Activated CD4-positive, alpha-beta T cell treated with anti-CD3 and anti-CD28 coated beads, Interleukin-2, amount 10 ng/mL, durations not matched to agents 7 days and 5 days (primary cell): ENCODE measurements at regions of chr1 and their contacts with region 1.

Region 1: GRCh38 chr1:43934101-43934985 is 742 bp downstream of the ARTN start:
- DNase-seq: peak; percentile 62
- H3K4me3 Mint-ChIP-seq: no peak overlapping the region
- H3K27ac Mint-ChIP-seq: no peak overlapping the region
- H3K4me1 Mint-ChIP-seq: peaks cover 17% of the 10 kb centered on the region
- H3K27me3 Mint-ChIP-seq: peaks cover 21% of the 10 kb centered on the region

Region 2: DNA sequence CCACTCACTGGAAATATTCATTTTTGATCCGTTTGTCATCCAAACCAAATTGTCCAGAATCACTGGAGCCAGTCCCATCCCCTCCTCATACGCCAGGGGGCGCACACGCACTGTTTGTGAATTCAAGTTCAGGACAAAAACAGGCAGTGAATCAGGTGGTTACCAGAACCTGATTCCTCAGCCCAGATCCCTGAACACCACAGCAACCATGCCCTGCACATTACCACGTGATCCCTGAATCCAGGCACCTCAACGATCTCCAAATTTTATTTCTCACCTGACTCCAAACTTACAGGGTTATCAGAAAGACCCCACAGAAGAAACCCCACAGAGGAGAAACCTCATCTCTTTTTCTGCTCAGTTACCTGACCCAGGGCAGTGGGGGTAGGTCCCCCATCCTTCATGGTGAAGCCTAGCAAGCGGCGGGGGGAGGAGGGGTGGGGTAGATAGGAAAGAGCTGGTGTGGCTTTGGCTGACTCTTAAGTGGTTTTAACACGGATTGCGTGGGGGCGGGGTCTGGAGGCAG is 405.1 kb before region 1 on chr1:
- CTCF ChIA-PET with region 1: interaction called, 10 read pairs
- POLR2A ChIA-PET with region 1: interaction called, 3 read pairs
- DNase-seq: peak; percentile 87
- H3K4me3 Mint-ChIP-seq: peak overlapping the region; percentile 26
- H3K27ac Mint-ChIP-seq: no peak overlapping the region
- H3K4me1 Mint-ChIP-seq: peaks cover 24% of the 10 kb centered on the region
- H3K27me3 Mint-ChIP-seq: peaks cover 43% of the 10 kb centered on the region

Region 3: DNA sequence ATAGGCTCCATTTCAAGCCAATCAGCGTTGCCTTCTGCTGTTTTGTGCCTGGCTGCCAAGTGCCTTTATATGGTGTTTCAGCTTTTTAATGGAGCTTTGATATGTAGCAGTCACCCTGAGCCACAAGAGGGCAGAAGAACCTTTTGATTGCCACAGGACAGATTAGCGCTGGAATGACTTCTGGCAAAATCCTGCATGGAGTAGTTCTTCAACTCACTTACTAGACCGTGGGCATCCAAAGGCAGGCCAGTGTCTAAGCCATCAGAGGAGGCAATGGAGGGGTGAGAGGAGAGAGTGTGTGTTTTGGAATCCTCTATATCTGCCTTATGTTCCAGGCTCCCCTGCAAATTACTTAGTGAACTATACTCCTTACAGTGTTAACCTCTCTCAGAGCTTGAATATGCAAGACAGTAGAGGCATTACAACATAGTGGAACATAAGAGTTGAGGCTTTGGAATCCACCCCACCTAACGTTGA is 170.8 kb before region 1 on chr1:
- CTCF ChIA-PET with region 1: interaction called, 85 read pairs
- POLR2A ChIA-PET with region 1: no interaction called
- DNase-seq: peak; percentile 63
- H3K4me3 Mint-ChIP-seq: no peak overlapping the region
- H3K27ac Mint-ChIP-seq: no peak overlapping the region
- H3K4me1 Mint-ChIP-seq: no peaks in the 10 kb centered on the region
- H3K27me3 Mint-ChIP-seq: no peaks in the 10 kb centered on the region

Region 4: DNA sequence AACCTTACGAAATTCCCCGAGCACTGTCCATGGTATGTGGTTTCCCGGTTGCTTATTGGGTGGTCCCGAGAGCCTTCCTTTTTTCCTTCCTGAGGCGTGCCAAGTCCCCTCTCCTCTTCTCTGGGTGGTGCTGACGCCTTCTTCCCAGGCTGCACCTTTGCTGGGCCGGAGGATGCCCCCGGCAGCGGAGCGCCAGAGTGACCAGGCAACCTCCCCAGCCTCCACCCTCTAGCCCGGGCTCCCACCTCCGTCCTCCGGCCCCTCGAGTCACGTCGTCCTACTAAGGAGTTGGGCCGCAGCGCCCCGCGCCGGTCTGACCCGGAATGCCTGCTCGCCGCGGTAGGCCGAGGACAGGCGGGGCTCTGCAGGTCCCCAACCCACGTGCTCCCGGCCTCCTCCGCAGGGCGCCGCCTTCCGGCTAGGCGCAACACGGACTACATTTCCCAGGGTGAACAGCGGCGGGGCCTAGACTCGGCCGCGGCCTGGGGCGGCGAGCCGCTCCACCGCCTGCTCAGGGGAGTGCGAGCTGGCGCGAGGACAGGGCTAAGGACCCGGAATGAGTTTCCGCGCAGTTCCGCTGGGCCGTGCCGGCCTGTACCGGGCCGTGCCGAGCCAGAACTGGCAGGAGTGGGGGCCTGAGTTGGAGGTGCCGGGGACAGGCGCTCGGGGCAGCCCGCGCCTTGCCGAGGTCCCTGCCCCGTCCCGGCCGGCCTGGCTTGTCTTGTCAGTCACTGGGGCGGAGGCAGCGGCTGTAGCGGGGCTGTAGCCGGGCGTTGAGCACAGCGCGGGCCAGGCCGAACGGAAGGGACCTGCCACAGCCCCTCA is 12.1 kb after region 1 on chr1 and contains the start of gene IPO13:
- CTCF ChIA-PET with region 1: interaction called, 93 read pairs
- POLR2A ChIA-PET with region 1: interaction called, 3 read pairs
- DNase-seq: peak; percentile 95
- H3K4me3 Mint-ChIP-seq: peak within 1 kb of the TSS; percentile 80
- H3K27ac Mint-ChIP-seq: peak within 1 kb of the TSS; percentile 94
- H3K4me1 Mint-ChIP-seq: peaks cover 47% of the 10 kb centered on the region
- H3K27me3 Mint-ChIP-seq: no peaks in the 10 kb centered on the region
- total RNA-seq, gene IPO13: 22.0 to 27.2 TPM

Region 5: DNA sequence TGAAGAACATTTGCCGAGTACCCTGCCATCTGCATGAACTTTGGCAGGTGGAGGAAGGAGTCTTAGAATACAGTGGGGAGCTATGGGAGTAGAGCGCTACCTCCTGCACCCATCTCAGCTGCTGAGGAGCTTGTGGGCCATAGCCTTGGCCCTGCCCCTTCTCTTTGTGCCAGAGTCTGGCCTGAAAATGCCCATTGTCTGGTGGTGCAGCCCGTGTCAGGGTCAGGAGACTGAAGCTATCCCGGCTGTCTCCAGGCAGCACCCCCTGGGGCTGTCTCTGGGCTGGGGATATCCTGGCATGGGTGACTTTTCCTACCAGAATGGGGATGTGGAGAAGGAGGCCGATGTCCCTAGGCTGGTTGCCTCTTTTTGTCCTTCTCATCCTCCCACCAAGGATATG is 19.7 kb after region 1 on chr1:
- CTCF ChIA-PET with region 1: interaction called, 93 read pairs
- POLR2A ChIA-PET with region 1: no interaction called
- DNase-seq: no peak
- H3K4me3 Mint-ChIP-seq: no peak overlapping the region
- H3K27ac Mint-ChIP-seq: no peak overlapping the region
- H3K4me1 Mint-ChIP-seq: peaks cover 6% of the 10 kb centered on the region
- H3K27me3 Mint-ChIP-seq: no peaks in the 10 kb centered on the region

Region 6: DNA sequence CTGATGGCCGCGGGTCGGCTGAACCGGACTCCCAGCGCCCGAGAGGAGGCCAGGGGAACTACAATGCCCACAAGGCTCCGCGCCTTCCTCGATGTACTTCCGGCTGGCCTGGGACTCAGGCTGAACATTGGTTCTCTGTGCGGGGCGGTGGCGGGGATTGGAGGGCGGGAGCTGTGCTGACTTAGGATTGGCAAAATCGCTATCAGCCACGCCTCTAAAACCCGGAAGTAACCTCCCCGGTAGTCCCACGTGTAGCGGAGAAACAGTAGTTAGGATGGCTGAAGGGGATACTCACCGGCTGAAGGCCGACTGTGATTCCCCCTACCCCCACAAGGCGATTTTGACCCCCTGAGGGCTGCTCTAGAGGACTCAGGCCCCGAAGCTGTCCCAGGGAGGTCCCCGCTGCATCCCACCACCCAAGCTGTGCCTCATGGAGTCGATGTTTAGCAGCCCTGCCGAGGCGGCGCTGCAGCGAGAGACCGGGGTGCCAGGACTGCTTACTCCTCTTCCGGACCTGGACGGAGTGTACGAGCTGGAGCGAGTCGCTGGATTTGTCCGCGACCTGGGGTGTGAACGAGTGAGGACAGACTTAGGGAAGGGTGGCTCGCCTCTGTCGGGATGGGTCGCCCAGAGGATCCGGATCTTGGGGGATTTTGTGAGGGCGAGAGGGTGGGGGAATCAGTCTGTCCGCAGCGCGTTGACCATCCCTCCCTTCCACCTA is 35.6 kb after region 1 on chr1 and contains the start of gene DPH2:
- CTCF ChIA-PET with region 1: interaction called, 11 read pairs
- POLR2A ChIA-PET with region 1: no interaction called
- DNase-seq: peak; percentile 98
- H3K4me3 Mint-ChIP-seq: peak within 1 kb of the TSS; percentile 93
- H3K27ac Mint-ChIP-seq: peak within 1 kb of the TSS; percentile 92
- H3K4me1 Mint-ChIP-seq: peaks cover 34% of the 10 kb centered on the region
- H3K27me3 Mint-ChIP-seq: no peaks in the 10 kb centered on the region
- total RNA-seq, gene DPH2: 28.0 to 30.0 TPM